ENCODE measurements at regions of chr11 and their contacts with region 1.

Region 1: GRCh38 chr11:128831174-128832120 is 35.6 kb downstream of the KCNJ1 start:
- DNase-seq: peak; percentile 38 to 86
- H3K4me3 ChIP-seq: peak overlapping the region in 1 of 2 donors; percentile 13
- H3K27ac ChIP-seq: no peak overlapping the region
- H3K4me1 ChIP-seq: peaks cover 0 to 5% of the 10 kb centered on the region in 2 donors
- H3K27me3 ChIP-seq: no peaks in the 10 kb centered on the region
- CTCF ChIP-seq: peak; percentile 69 to 94 (median 78)

Region 2: DNA sequence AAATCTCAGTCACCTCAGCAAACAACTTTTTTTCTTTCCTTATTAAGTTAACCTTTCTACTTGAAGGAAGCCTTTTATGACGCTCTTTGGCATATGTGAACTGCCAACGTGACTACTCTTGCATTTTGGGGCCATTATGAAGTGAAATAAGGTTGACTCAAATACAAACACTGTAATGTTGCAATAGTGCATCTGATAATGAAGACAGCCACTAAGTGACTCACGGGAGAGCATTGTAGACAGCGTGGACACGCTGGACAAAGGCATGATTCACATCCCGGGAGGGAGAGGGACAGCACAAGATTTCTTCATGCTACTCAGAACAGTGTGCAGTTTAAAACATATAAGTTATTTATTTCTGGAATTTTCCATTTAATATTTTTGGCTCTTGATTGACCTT is 804.9 kb before region 1 on chr11:
- intact Hi-C with region 1: loop called (anchors 2 kb)
- DNase-seq: no peak
- H3K4me3 ChIP-seq: no peak overlapping the region
- H3K27ac ChIP-seq: no peak overlapping the region
- H3K4me1 ChIP-seq: peaks cover 0 to 4% of the 10 kb centered on the region in 2 donors
- H3K27me3 ChIP-seq: no peaks in the 10 kb centered on the region
- CTCF ChIP-seq: no peak

Region 3: DNA sequence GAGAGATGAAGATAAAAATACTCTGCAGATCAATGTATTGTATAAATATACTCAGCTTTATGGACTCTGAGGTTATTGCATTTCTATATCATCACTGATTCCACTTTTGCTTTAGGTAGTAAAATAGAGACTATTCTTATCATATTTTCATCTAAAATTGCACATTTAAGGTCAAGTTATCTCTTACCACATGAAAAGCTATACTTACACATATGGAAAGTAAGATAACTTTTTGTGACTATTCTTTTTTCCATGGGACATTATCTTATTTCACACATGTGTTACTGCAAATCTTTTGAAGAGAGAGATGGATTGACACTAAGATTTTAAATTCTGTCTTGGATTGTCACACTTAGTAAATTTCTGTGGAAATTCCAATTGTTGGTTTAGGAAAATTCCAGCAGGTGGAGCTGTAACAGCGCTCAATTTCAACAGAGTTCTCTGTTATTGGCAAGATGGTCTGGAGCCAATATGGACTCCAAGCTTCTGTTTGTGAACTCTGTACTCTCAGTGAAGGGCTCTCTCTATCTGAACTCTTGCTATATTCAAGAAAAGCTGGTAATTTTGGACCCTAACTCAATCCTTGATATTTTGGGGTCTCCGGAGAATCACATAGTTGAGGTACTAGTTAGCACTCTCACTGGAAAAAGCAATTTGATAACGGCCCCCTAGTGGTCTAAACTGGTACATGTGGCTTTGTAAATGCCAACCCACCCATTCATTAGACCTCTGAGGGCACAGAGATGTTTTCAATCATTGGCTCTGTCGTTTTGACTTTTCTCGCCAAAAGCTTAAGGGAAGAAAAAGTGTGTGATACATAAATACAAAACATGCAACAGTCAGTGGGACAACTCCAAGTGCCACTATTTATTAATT is 673.8 kb before region 1 on chr11:
- intact Hi-C with region 1: loop called (anchors 5 kb)
- DNase-seq: peak in 1 of 2 donors; percentile 66
- H3K4me3 ChIP-seq: peak overlapping the region in 1 of 2 donors; percentile 35
- H3K27ac ChIP-seq: no peak overlapping the region
- H3K4me1 ChIP-seq: peaks cover 0 to under 1% of the 10 kb centered on the region in 2 donors
- H3K27me3 ChIP-seq: no peaks in the 10 kb centered on the region
- CTCF ChIP-seq: peak; percentile 76 to 81 (median 80)

Region 4: DNA sequence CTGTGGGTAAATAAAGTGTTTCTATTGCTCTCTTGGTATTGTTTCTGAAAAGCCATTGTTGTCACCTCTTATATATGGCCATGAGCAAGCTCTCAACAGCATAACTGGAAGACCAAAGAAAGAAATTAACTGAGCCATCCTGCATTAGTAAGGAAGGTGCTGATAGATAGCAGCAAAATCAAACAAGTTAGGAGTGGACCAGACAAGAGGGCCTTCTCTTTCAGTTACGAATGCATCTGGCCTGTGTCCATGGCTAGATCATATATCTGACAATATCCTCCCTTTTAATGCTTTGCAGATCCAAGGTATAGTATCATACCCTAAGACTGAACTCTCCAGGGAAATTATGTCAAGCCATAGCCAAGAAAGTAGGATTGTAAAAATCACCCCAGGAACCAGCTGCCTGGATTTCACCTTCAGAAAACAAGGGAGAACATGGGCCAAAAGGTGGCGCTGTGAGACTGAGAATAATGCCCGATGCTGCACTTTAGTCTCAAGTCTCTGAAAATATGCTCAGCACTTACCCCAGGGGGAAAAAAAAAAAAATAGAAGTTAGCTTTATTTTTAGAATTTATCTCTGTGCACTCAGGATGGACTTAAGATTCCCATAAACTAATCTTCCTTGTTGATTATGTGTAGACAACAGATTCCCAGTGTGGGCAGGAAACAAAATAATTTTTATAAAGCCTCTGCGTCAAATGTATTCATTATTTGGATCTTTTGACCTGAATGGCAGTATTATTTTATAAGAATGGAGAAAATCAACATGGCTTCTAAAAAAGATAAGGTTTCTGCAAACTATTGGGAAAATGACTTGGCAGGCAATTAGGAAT is 659.2 kb before region 1 on chr11:
- intact Hi-C with region 1: loop called (anchors 2 kb)
- DNase-seq: peak in 1 of 2 donors; percentile 91
- H3K4me3 ChIP-seq: no peak overlapping the region
- H3K27ac ChIP-seq: no peak overlapping the region
- H3K4me1 ChIP-seq: no peaks in the 10 kb centered on the region
- H3K27me3 ChIP-seq: no peaks in the 10 kb centered on the region
- CTCF ChIP-seq: peak; percentile 48 to 84 (median 74)

Region 5: GRCh38 chr11:128522055-128522942 is 309.1 kb before region 1 on chr11:
- intact Hi-C with region 1: no loop called
- DNase-seq: peak; percentile 79 to 96
- H3K4me3 ChIP-seq: peak overlapping the region; percentile 84 to 86
- H3K27ac ChIP-seq: peak overlapping the region; percentile 96
- H3K4me1 ChIP-seq: peaks cover 9 to 38% of the 10 kb centered on the region in 2 donors
- H3K27me3 ChIP-seq: no peaks in the 10 kb centered on the region
- CTCF ChIP-seq: no peak

Region 6: DNA sequence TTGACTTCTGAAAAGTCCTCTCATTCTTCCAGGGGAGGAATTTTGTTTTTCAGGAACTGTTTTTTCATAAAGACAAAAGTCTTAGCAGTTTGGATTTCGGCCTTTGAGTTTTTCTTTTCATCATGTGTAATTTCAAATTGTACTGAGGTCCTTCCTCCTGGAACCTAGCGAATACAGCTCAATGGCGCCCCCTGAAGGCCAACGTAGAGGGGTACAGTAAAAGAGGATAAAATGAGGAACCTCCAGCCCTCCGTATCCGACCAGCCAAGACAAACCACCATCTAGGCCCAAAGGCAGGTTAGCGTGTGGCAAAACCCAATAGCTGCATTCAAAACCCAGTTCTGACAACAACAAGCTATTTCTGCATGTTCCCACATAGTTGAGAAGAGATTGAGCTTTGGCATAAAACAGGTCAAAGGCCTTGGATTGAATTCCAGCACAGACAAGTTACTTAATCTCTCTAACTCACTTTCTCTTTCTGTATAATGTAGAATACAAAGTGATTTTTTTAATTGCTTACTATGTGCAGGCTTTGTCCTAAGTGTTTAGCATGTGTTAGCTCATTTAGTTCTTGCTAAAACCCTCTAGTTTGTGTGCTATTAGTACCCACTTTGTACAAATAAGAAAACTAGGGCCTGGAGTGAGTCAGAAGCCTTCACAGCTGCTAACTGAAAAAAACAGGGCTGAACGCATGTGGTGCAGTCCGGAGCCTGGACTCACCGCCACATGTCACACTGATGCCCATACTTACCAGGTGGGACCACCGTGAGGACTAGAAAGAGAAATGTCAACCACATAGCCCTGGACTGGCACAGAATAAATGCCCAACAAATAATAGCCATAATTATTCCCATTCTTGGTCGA is 200.8 kb before region 1 on chr11:
- intact Hi-C with region 1: loop called (anchors 1 kb)
- DNase-seq: peak in 1 of 2 donors; percentile 92
- H3K4me3 ChIP-seq: no peak overlapping the region
- H3K27ac ChIP-seq: peak overlapping the region; percentile 45 to 49
- H3K4me1 ChIP-seq: no peaks in the 10 kb centered on the region
- H3K27me3 ChIP-seq: no peaks in the 10 kb centered on the region
- CTCF ChIP-seq: peak; percentile 86 to 91 (median 86)

Region 7: GRCh38 chr11:128776424-128777284 is 54.8 kb before region 1 on chr11:
- intact Hi-C with region 1: loop called (anchors 5 kb)
- DNase-seq: no peak
- H3K4me3 ChIP-seq: peak overlapping the region in 1 of 2 donors; percentile 26
- H3K27ac ChIP-seq: no peak overlapping the region
- H3K4me1 ChIP-seq: no peaks in the 10 kb centered on the region
- H3K27me3 ChIP-seq: no peaks in the 10 kb centered on the region
- CTCF ChIP-seq: peak in 2 of 3 experiments; percentile 56